ENCODE measurements at regions of chr12 and their contacts with region 1.

Region 1: DNA sequence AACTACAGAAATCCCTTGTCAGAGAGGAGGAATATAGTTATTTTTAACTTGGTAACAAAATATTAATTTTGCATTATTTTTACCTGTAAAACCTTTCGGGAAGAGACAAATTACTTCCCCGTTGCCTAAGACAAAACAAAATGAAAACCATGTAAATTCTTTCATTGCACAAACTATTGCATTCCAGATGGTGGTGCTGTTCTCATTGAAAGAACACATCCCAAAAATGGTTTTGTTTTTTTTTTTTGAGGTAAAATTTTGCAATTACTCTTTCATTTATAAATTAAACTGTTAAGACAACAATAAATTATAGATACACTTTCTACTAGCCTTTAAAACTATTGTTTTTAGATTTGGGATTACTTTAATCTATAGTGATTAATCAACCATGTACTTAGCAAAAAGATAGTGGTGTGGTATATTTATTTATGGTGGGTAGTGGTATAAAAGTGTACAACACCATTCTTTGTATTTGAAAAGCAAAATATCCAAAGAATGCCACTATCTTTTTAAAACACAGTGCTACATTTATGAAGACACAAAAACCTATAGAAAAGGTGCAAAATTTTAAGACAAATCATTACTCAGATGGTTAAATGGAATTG is 115.5 kb downstream of the SLC38A1 start:
- DNase-seq: peak; percentile 12
- CTCF ChIP-seq: peak; percentile 62

Region 2: DNA sequence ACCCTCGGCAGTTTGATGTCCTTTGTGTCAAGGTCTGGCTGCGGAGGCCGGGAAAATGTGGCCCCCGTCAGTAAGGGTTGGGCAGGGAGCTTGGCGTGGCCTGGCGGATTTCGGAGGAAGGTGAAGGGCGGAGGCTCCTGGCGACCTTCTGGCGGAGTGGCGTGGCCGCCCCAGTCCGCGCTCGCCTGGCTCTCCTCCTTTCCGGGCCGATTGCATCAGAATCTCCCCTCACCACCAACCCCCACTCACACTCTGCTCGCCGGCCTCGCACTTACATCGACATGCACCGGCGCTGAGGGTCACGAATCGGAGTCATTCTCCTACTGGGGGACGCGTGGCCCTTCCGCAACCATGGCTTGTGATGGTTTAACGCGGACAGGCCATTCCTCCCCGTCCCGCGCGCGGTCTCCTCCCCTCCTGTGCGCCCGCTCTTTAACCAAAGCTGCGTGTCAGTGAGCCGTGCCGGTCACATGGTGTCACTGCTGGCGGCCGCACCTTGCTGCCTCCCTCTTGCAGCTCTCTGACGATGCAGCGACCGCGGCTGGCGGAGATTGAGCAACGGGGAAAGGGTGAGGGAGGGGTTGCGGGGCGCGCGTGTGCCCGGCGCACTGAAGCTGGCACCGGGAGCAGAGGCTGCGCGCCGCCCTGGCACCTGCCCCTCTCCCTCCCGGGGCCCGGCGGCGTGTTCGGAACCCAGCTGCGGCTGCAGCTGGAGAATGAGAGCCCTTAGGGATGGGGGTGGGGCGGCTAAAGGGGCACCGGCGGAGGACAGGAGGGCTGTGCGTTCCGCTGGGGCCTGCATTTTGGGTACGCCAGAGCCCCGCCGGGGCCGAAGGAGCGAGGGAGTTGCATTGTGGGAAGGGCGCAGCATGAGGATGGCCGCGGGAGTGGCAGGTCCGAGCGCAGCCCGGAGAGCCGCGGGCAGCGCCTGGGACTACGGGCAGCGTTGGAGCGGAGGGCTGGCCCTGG is 115.5 kb after region 1 on chr12 and contains the start of gene SLC38A1:
- in situ Hi-C with region 1: loop called (anchors 10 kb)
- DNase-seq: peak; percentile 90
- CTCF ChIP-seq: peak; percentile 7

Region 3: GRCh38 chr12:46661110-46661845 is 507.9 kb after region 1 on chr12:
- in situ Hi-C with region 1: loop called (anchors 25 kb)
- DNase-seq: peak; percentile 49
- CTCF ChIP-seq: peak; percentile 74